Heart left ventricle (tissue), 16 donors: ENCODE measurements at regions of chr10 and their contacts with region 1.

Region 1: GRCh38 chr10:114940735-114941134 is 2.7 kb downstream of the TRUB1 start:
- DNase-seq: no peak
- ATAC-seq: no peak
- H3K4me3 ChIP-seq: peak overlapping the region in 2 of 12 donors; percentile 1 to 17
- H3K27ac ChIP-seq: peak overlapping the region in 7 of 12 donors; percentile 24 to 94 (median 91)
- H3K4me1 ChIP-seq: peaks cover 0 to 38% (median 13%) of the 10 kb centered on the region in 12 donors
- H3K27me3 ChIP-seq: no peaks in the 10 kb centered on the region
- CTCF ChIP-seq: no peak
- POLR2A ChIP-seq: no peak

Region 2: GRCh38 chr10:114703377-114704107 is 237.2 kb before region 1 on chr10:
- intact Hi-C with region 1: loop called in 1 of 10 experiments (anchors 10 kb)
- DNase-seq: no peak
- ATAC-seq: peak in 3 of 4 donors; percentile 53 to 64 (median 61)
- H3K4me3 ChIP-seq: no peak overlapping the region
- H3K27ac ChIP-seq: peak overlapping the region in 3 of 12 donors; percentile 13 to 26 (median 13)
- H3K4me1 ChIP-seq: peaks cover 3 to 43% (median 11%) of the 10 kb centered on the region in 12 donors
- H3K27me3 ChIP-seq: no peaks in the 10 kb centered on the region
- CTCF ChIP-seq: peak; percentile 45 to 72 (median 60)
- POLR2A ChIP-seq: no peak